Left colon (tissue), 2 donors: ENCODE measurements at regions of chr19 and their contacts with region 1.

Region 1: DNA sequence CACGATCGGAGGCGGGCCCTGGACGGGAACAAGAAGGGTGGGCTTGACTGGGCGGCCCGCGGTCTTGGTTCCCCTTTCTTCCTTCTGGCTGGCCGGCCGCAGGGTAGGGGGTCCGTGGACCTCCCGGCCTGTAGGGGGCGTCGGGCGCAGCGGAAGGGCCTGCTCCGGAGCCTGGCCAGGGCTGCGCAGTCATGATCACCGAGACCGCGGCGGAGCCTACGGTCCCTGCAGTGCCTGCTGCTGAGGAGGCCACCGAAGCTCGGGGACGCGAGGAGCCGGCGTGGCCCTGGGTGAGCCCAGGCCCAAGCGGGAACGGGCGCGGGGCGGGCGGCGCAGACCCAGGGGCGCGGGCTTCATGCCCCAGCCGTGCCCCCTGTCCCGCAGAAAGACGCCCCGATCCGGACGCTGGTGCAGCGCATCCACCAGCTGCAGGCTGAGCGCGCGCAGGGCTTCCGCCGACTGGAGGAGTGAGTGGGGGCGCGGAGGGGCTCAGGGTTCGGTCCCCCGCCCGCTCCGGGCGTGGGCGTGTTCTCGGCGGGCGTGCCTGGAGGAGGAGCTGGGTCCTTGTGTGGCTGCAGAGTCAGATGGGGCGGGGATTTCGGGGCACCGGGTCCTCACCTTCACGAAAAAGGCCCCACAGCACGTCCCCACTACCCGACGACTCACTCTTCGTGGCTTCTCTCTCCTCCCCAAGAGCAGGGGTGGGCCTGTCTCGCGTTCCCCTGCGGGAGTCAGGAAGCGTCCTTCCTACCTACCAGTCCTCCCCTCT is at the start of gene REX1BD:
- DNase-seq: peak; percentile 84 to 89
- ATAC-seq: peak; percentile 85
- total RNA-seq, gene REX1BD: 49.2 to 53.4 TPM

Region 2: DNA sequence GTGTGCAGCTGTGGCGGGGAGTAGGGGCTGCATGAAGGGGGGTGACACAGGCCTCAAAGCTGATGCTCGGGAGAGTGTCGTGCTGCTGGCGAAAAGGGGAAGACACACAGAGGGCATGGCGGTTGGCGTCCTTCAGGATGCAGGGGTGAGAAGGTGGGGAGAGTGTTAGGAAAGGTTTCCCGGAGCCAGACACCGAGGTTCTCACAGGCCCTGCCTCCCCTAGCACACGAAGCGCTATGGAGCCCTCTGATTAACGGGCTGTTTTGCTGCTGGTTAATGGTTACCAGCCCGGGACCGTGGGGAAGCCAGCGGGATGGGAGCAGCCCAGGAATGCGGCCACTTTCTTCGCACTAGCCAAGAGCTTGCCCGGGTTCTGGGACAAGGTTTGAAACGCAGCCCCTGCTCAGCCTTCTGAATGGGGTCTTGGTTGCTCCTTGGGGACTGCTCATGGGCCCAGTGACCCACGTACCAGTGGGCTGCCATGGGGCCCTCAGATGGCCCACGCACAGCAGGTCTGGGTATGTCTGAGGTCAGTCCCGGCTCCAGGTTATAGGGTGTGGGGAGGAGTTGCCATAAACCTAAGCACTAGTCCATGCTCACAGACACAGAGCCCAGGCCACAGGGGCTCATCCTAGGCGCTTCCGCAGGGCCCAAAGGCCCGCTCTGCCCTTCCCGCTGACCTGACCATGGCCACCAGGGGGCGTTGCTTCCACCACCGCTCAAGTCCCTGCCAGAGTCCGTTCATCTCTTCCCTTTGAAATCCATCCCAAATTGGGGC is 119.5 kb before region 1 on chr19:
- intact Hi-C with region 1: loop called in 1 of 2 experiments (anchors 10 kb)
- DNase-seq: peak in 1 of 2 donors; percentile 79
- ATAC-seq: peak; percentile 65

Region 3: GRCh38 chr19:18488838-18489626 is 99.8 kb before region 1 on chr19:
- intact Hi-C with region 1: no loop called
- DNase-seq: peak in 1 of 2 donors; percentile 55
- ATAC-seq: peak; percentile 33

Region 4: GRCh38 chr19:18846862-18847548 is 258.2 kb after region 1 on chr19:
- intact Hi-C with region 1: loop called (anchors 5 to 10 kb)
- DNase-seq: peak; percentile 66 to 85
- ATAC-seq: peak; percentile 87

Region 5: DNA sequence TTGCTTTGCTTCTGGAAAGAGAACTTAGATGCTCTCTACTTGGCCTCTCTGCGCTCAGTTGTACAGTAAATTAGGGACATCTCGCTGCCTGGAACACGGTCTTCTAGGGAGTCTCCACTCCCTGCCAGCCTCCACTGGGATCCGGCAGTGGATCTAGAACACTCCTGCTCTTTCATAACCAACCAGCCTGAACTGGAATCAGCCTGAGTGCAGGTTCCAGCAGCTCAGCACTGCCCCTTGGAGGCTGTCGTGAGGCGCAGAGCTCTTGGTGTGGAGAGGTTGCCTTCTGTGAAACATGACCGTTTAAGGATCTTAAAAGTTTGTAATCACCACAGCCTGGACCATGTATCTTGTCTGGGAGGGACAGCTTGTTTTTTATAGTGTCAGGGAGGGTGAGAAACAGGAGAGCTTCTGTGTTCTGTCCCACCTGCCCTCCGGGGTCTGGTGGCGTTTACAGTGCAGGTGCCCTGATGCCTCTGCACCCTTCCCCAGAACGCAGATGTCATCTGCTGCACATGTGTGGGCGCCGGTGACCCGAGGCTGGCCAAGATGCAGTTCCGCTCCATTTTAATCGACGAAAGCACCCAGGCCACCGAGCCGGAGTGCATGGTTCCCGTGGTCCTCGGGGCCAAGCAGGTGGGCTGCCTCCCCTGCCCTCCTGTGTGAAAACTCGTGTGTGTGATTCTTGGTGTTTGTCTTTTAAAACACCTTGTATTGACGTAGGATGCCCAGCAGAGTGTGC is 267.8 kb after region 1 on chr19:
- intact Hi-C with region 1: loop called in 1 of 2 experiments (anchors 10 kb)
- DNase-seq: no peak
- ATAC-seq: peak; percentile 48